Psoas muscle (tissue), 8 donors: ENCODE measurements at regions of chr20 and their contacts with region 1.

Region 1: GRCh38 chr20:46562373-46563169 is 12.1 kb upstream of the OCSTAMP start:
- DNase-seq: peak; percentile 56 to 72
- ATAC-seq: peak; percentile 69 to 93 (median 80)
- H3K4me3 ChIP-seq: peak overlapping the region; percentile 52
- H3K27ac ChIP-seq: no peak overlapping the region
- H3K4me1 ChIP-seq: peaks cover 5% of the 10 kb centered on the region
- H3K27me3 ChIP-seq: peaks cover 0 to 2% (median 0%) of the 10 kb centered on the region in 3 donors
- CTCF ChIP-seq: peak; percentile 86

Region 2: DNA sequence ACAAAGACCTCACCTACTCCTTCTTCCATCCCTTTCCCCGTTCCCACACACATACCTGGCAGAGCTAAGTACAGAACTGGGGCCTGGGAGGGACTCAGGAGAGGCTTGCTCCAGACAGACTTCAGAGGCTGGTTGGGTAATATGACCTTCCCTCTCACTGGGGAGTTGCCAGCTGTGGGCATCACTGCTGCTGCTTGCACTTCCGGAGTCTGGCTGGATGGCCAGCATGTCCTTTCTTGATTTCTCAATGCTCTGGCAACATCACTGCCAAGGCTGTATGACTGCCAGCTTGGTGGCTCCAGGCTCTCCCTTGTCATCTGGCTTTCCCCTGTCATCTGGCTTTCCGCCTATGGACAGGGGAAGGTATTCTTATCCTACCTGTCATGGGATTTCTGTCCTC is 302.1 kb before region 1 on chr20:
- intact Hi-C with region 1: no loop called
- DNase-seq: peak; percentile 76 to 91
- ATAC-seq: peak; percentile 90 to 93 (median 92)
- H3K4me3 ChIP-seq: no peak overlapping the region
- H3K27ac ChIP-seq: peak overlapping the region; percentile 59
- H3K4me1 ChIP-seq: no peaks in the 10 kb centered on the region
- H3K27me3 ChIP-seq: peaks cover 0 to 9% (median 0%) of the 10 kb centered on the region in 3 donors
- CTCF ChIP-seq: no peak

Region 3: DNA sequence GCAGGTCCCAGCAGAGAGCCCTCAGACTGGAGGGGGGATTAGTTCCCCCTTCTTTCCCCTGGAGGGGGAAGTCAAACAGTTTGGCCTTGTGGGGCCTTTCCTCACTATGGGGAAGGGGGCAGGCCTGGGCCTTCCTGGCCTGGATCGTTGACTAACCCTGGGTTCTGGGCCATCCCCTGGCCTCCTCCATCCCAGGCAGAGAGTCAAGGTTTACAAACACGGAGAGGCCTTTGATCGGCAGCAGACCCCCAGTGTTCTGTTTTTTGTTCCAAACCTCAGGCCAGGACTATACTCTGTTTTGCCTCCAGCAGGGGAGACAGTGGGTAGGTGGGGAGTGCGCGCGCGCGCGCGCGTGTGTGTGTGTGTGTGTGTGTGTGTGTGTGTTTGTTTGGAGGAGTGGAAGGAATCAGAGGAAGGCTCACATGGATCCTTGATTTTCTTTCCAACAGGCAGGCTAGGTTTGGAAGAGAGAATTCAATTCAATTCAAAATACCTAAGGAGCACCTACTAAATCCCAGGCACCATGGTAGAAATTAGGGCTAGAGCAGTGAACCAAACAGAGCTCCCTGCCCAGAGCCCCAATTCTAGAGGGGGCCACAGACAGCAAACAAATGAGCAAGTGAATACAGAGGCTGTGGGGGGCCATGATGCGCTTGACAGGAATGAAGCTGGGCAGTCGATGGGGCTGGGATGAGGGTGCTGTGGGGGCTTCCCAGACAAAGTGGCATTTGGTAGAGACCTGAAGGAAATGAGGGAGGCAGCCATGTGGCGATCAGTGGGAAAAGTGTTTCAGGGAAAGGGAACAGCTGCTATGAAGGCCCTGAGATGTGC is 111.9 kb after region 1 on chr20:
- intact Hi-C with region 1: loop called in 1 of 2 experiments (anchors 5 kb)
- DNase-seq: no peak
- ATAC-seq: no peak
- H3K4me3 ChIP-seq: no peak overlapping the region
- H3K27ac ChIP-seq: no peak overlapping the region
- H3K4me1 ChIP-seq: no peaks in the 10 kb centered on the region
- H3K27me3 ChIP-seq: no peaks in the 10 kb centered on the region
- CTCF ChIP-seq: no peak